Activated CD8-positive, alpha-beta memory T cell treated with anti-CD3 and anti-CD28 coated beads, Interleukin-2, amount 10 ng/mL, durations not matched to agents 7 days and 5 days (primary cell): ENCODE measurements at regions of chr12 and their contacts with region 1.

Region 1: GRCh38 chr12:3727877-3728632 is 24.9 kb downstream of the CRACR2A start:
- DNase-seq: peak; percentile 84
- ATAC-seq: peak; percentile 85
- H3K4me3 Mint-ChIP-seq: peak overlapping the region; percentile 61
- H3K27ac Mint-ChIP-seq: peak overlapping the region; percentile 96
- H3K4me1 Mint-ChIP-seq: peaks cover 43% of the 10 kb centered on the region
- H3K27me3 Mint-ChIP-seq: no peaks in the 10 kb centered on the region

Region 2: GRCh38 chr12:3698218-3698974 is 29.7 kb before region 1 on chr12:
- CTCF ChIA-PET with region 1: no interaction called
- DNase-seq: no peak
- ATAC-seq: no peak
- H3K4me3 Mint-ChIP-seq: no peak overlapping the region
- H3K27ac Mint-ChIP-seq: no peak overlapping the region
- H3K4me1 Mint-ChIP-seq: peaks cover 2% of the 10 kb centered on the region
- H3K27me3 Mint-ChIP-seq: no peaks in the 10 kb centered on the region

Region 3: DNA sequence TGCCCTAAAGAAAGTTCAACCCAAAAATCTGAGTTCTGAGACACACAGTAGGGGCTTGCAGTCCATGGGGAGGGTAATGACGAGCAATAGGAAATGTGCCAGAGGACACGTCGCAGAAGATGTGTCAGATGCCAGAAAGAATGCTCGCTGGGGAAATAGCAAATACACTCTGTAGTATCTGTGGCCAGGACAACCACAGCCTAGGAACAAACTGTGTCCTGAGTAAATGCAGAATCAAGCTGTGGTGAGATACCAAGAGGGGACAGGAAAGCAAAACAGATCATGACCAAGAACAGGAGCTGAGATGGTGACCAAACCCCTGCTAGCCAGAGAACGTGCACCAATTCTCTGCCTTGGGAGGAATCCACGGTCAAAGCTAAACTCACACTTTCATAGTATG is 15.7 kb after region 1 on chr12:
- CTCF ChIA-PET with region 1: interaction called, 59 read pairs
- DNase-seq: peak; percentile 93
- ATAC-seq: peak; percentile 82
- H3K4me3 Mint-ChIP-seq: peak overlapping the region; percentile 58
- H3K27ac Mint-ChIP-seq: peak overlapping the region; percentile 96
- H3K4me1 Mint-ChIP-seq: peaks cover 82% of the 10 kb centered on the region
- H3K27me3 Mint-ChIP-seq: no peaks in the 10 kb centered on the region

Region 4: GRCh38 chr12:3752741-3753486 is 24.9 kb after region 1 on chr12 and contains the start of gene CRACR2A:
- CTCF ChIA-PET with region 1: interaction called, 19 read pairs
- DNase-seq: peak; percentile 94
- ATAC-seq: peak; percentile 88
- H3K4me3 Mint-ChIP-seq: peak within 1 kb of the TSS; percentile 82
- H3K27ac Mint-ChIP-seq: peak within 1 kb of the TSS; percentile 98
- H3K4me1 Mint-ChIP-seq: peaks cover 61% of the 10 kb centered on the region
- H3K27me3 Mint-ChIP-seq: no peaks in the 10 kb centered on the region
- total RNA-seq, gene CRACR2A: 36.5 to 52.0 TPM

Region 5: DNA sequence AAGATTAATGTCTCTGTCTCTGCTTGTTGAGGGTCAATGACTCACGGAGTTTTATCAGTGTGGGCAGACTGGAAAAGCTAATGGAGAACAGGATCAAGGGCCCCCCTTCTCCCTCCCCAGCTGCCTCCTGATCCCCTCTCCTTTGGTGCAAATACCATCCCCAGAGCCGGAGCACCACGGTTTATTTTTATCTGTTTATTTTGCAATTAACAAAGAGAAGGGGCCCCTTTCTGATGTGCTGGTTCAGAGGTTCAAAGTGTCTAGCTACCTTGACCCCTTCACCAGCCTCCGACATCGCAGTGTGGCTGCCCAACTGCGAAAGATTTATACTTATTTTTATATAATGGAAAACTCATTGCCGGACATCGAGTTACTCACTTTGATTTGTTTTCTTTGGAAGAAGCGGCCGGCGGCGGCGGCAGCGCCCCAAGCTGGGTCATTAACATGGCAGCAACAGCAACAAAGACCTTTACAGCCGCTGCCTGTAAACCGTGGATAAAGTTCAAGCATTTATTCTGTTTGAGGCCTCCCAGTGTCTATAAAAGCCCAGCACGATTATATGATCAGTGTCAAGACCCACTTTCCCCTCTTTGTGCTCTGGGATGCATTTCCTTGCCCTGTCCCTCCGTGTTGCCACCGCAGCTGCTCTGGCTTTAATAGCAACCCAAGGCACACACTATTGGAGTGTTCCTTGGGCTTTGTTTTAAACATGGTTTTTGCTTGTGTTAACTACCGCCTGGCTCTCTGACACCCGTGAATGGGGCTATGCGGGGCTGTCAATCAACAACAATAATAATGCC is 192.5 kb after region 1 on chr12:
- CTCF ChIA-PET with region 1: no interaction called
- DNase-seq: no peak
- ATAC-seq: no peak
- H3K4me3 Mint-ChIP-seq: no peak overlapping the region
- H3K27ac Mint-ChIP-seq: no peak overlapping the region
- H3K4me1 Mint-ChIP-seq: no peaks in the 10 kb centered on the region
- H3K27me3 Mint-ChIP-seq: peaks cover 13% of the 10 kb centered on the region